ENCODE measurements at regions of chr2 and their contacts with region 1.

Region 1: DNA sequence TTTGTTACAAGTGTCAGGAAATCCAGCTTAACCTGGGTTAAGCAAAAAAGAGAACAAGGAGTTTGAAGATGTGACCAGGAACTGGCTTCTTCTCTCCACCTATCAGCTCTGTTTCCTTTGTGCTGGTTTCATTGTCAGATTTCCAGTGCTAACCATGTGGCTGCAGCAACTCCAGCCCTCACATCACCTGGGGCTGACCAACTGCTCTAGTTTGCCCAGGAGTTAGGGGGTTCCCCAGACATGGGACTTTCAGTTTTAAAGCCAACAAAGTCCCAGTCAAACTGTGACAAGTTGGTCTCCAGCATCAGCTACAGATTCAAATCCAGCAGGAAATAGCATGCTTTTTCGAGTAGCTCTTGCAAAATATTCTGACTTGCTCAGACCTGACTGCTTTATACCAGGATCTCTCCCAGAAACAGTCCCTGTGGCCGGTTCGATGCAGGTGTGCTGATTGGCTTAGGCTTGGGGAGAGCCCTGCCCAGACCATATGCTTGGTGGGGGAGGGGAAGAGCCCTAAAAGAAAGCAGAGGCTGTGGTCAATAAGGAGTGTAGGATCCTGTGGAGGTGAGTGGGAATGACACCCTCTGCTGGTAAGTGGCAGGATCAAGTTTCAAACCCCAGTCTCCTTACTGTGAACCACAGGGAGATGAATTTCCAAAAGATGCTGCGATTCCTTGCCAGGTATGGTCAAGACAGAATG is 49.5 kb downstream of the KCNE4 start:
- DNase-seq: peak; percentile 63
- H3K4me3 Mint-ChIP-seq: no peak overlapping the region
- H3K27ac Mint-ChIP-seq: no peak overlapping the region
- H3K4me1 Mint-ChIP-seq: peaks cover 8% of the 10 kb centered on the region
- H3K27me3 Mint-ChIP-seq: no peaks in the 10 kb centered on the region
- CTCF ChIP-seq: peak; percentile 50

Region 2: GRCh38 chr2:222693837-222694236 is 407.7 kb before region 1 on chr2:
- CTCF ChIA-PET with region 1: no interaction called
- intact Hi-C with region 1: loop called (anchors 2 kb)
- DNase-seq: no peak
- H3K4me3 Mint-ChIP-seq: no peak overlapping the region
- H3K27ac Mint-ChIP-seq: peak overlapping the region; percentile 36
- H3K4me1 Mint-ChIP-seq: peaks cover 50% of the 10 kb centered on the region
- H3K27me3 Mint-ChIP-seq: no peaks in the 10 kb centered on the region
- CTCF ChIP-seq: no peak

Region 3: GRCh38 chr2:222969491-222969890 is 132.0 kb before region 1 on chr2:
- CTCF ChIA-PET with region 1: interaction called, 25 read pairs
- intact Hi-C with region 1: loop called (anchors 2 kb)
- DNase-seq: no peak
- H3K4me3 Mint-ChIP-seq: no peak overlapping the region
- H3K27ac Mint-ChIP-seq: no peak overlapping the region
- H3K4me1 Mint-ChIP-seq: peaks cover 8% of the 10 kb centered on the region
- H3K27me3 Mint-ChIP-seq: no peaks in the 10 kb centered on the region
- CTCF ChIP-seq: no peak

Region 4: GRCh38 chr2:222982010-222982908 is 119.2 kb before region 1 on chr2:
- CTCF ChIA-PET with region 1: interaction called, 6 read pairs
- intact Hi-C with region 1: loop called (anchors 2 kb)
- DNase-seq: peak; percentile 55
- H3K4me3 Mint-ChIP-seq: no peak overlapping the region
- H3K27ac Mint-ChIP-seq: peak overlapping the region; percentile 83
- H3K4me1 Mint-ChIP-seq: peaks cover 40% of the 10 kb centered on the region
- H3K27me3 Mint-ChIP-seq: no peaks in the 10 kb centered on the region
- CTCF ChIP-seq: no peak

Region 5: DNA sequence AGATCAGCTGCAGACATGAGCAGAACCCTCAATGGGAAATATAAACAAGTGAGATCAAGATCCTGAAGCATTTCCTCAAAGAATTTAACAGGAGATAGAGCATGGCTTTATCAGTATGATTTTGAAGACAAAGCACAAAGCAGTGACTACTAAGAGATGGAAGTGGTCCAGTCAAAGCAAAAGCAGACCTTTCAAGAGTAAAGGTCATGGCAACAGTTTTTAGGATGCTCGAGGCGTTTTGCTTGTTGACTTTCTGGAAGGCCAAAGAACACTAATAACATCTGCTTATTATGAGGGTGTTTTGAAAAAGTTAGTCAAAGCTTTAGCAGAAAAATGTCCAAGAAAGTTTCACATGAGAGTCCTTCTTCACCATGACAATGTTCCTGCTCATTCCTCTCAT is 79.0 kb after region 1 on chr2:
- CTCF ChIA-PET with region 1: no interaction called
- intact Hi-C with region 1: no loop called
- DNase-seq: no peak
- H3K4me3 Mint-ChIP-seq: no peak overlapping the region
- H3K27ac Mint-ChIP-seq: no peak overlapping the region
- H3K4me1 Mint-ChIP-seq: no peaks in the 10 kb centered on the region
- H3K27me3 Mint-ChIP-seq: no peaks in the 10 kb centered on the region
- CTCF ChIP-seq: no peak

Measured in Calu3 (cell line).